Activated CD8-positive, alpha-beta T cell treated with anti-CD3 and anti-CD28 coated beads, Interleukin-2, amount 10 ng/mL, durations not matched to agents 7 days and 5 days (primary cell): ENCODE measurements at regions of chr12 and their contacts with region 1.

Region 1: DNA sequence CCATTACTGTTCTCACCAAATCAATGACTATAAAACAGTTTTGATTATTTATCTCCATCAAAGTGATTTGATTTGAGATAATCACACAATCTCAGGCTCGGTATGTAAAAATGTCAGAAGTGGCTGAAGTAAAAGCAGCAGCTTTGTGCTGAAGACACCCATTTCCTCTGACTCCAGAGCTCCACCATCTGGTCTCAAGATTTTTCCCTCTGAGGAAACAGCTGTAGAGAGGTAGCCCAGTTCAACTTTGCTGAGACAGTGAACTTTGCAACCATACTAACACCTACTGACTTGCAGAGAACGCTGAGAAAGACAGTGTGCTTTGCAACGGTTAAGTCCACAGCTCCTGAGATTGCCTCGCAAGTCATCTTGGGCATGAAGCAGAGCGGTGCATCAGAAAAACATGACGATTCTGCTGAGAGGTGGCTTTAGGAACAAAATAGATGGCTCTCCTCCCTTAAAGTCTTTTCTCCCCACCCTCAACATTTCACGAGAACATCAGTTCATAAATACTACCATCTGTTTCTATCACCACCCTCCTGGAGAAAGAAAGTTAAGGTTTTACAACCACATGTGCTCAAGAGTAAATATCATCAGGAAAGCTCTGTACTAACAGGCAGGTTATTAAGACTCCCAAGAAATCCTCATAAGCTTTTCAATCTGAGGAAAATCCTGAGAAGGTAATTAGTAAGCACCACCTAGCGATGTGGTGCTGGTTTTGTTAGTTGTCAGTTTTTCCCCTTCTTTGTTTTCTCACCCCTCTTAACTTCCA is 34.8 kb downstream of the HIGD1C start:
- DNase-seq: peak; percentile 57
- ATAC-seq: peak; percentile 69
- H3K4me3 Mint-ChIP-seq: no peak overlapping the region
- H3K27ac Mint-ChIP-seq: peak overlapping the region; percentile 45
- H3K4me1 Mint-ChIP-seq: peaks cover 12% of the 10 kb centered on the region
- H3K27me3 Mint-ChIP-seq: no peaks in the 10 kb centered on the region

Region 2: GRCh38 chr12:50825372-50825838 is 161.7 kb before region 1 on chr12:
- CTCF ChIA-PET with region 1: interaction called, 75 read pairs
- POLR2A ChIA-PET with region 1: no interaction called
- DNase-seq: no peak
- ATAC-seq: peak; percentile 73
- H3K4me3 Mint-ChIP-seq: no peak overlapping the region
- H3K27ac Mint-ChIP-seq: peak overlapping the region; percentile 46
- H3K4me1 Mint-ChIP-seq: peaks cover 5% of the 10 kb centered on the region
- H3K27me3 Mint-ChIP-seq: no peaks in the 10 kb centered on the region

Region 3: GRCh38 chr12:50924439-50925341 is 62.5 kb before region 1 on chr12:
- CTCF ChIA-PET with region 1: interaction called, 10 read pairs
- POLR2A ChIA-PET with region 1: interaction called, 3 read pairs
- DNase-seq: peak; percentile 80
- ATAC-seq: peak; percentile 90
- H3K4me3 Mint-ChIP-seq: peak overlapping the region; percentile 77
- H3K27ac Mint-ChIP-seq: peak overlapping the region; percentile 82
- H3K4me1 Mint-ChIP-seq: peaks cover 51% of the 10 kb centered on the region
- H3K27me3 Mint-ChIP-seq: no peaks in the 10 kb centered on the region